Colonic mucosa (tissue), 4 donors: ENCODE measurements at regions of chr13 and their contacts with region 1.

Region 1: GRCh38 chr13:30739761-30740642 is 4.7 kb downstream of the ALOX5AP start:
- DNase-seq: no peak
- H3K4me3 ChIP-seq: no peak overlapping the region
- H3K27ac ChIP-seq: peak overlapping the region; percentile 47
- H3K4me1 ChIP-seq: peaks cover 8% of the 10 kb centered on the region
- H3K27me3 ChIP-seq: no peaks in the 10 kb centered on the region
- CTCF ChIP-seq: no peak

Region 2: GRCh38 chr13:30520571-30520970 is 219.4 kb before region 1 on chr13:
- intact Hi-C with region 1: no loop called
- DNase-seq: no peak
- H3K4me3 ChIP-seq: no peak overlapping the region
- H3K27ac ChIP-seq: no peak overlapping the region
- H3K4me1 ChIP-seq: no peaks in the 10 kb centered on the region
- H3K27me3 ChIP-seq: no peaks in the 10 kb centered on the region
- CTCF ChIP-seq: no peak

Region 3: DNA sequence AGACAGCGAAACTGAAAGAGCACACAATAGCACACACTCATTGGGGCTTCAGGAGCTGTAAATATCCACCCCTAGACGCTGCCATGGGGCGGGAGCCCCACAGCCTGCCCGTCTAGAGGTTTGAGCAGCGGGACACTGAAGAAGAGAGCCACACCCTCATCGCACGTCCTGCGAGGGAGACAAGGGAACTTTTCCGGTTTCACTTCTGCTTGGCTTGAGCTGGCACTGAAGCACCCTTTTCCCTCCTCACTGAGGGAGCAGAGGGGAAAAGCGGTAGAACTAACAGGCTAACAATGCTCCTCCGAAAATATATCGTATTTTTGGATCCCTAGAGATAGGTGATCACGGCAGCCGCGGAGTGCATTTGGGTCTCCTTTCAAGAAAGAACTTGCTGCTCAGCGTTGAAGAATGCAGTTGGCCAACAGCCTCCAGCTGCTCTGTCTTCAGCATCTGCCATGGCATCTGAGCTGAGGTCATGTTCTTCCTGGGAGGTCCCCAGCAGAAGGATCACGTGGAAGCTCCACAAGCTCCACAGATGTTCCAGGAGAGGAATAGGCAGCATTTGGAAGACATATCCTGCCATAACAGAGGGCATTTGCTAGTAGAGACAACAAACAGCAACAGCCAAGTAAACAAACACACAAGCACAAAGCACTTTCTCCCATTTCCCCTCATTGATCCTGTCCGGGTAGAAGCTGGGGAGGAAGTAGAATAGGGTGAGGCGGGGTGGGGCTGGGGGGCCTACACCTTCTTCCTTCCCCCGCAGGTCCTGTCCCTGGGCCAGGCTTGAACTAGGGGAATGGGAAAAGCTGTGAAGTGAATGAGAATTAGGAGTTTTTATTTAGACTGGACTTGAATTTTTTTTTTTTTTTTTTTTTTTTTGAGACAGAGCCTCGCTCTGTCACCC is 49.5 kb before region 1 on chr13:
- intact Hi-C with region 1: loop called (anchors 10 kb)
- DNase-seq: peak; percentile 79
- H3K4me3 ChIP-seq: peak overlapping the region; percentile 20
- H3K27ac ChIP-seq: peak overlapping the region; percentile 66
- H3K4me1 ChIP-seq: no peaks in the 10 kb centered on the region
- H3K27me3 ChIP-seq: no peaks in the 10 kb centered on the region
- CTCF ChIP-seq: no peak

Region 4: GRCh38 chr13:30818323-30818960 is 78.4 kb after region 1 on chr13:
- intact Hi-C with region 1: no loop called
- DNase-seq: no peak
- H3K4me3 ChIP-seq: no peak overlapping the region
- H3K27ac ChIP-seq: no peak overlapping the region
- H3K4me1 ChIP-seq: no peaks in the 10 kb centered on the region
- H3K27me3 ChIP-seq: no peaks in the 10 kb centered on the region
- CTCF ChIP-seq: no peak